ENCODE measurements at regions of chr17 and their contacts with region 1.

Region 1: GRCh38 chr17:6753006-6753445 is 2.8 kb upstream of the XAF1 start:
- DNase-seq: no peak
- H3K4me3 Mint-ChIP-seq: no peak overlapping the region
- H3K27ac Mint-ChIP-seq: peak overlapping the region; percentile 64
- H3K4me1 Mint-ChIP-seq: peaks cover 52% of the 10 kb centered on the region
- H3K27me3 Mint-ChIP-seq: peaks cover 4% of the 10 kb centered on the region

Region 2: DNA sequence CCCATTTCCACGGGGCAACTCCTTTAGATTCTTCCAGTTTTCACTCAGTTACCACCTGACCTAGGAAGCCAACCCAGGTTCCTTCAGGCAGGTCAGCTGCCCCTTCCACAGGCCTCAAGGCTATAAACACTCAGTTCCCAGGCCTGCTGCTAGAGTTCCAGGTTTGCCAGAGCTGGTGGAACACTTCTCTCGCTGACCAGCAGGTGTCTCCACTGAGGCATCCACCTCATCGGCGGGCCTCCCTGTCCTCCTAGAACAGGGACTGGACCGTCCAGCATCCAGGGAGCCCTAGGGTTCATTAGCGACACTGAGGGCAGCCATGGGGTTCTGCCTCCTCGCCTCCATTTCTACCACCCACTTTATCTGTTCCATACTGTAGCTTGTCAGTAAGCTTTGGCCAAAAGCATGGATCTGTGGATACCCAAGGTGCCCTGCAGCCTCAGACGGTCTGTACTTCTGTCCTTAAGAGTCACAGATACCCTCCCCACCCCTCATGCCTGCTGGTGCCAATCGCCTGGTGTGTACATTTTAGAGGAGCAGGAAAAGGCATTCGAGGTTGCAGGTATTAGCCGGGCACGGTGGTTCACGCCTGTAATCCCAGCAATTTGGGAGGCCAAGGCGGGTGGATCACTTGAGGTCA is 279.8 kb before region 1 on chr17:
- intact Hi-C with region 1: loop called (anchors 5 kb)
- DNase-seq: peak; percentile 57
- H3K4me3 Mint-ChIP-seq: no peak overlapping the region
- H3K27ac Mint-ChIP-seq: no peak overlapping the region
- H3K4me1 Mint-ChIP-seq: no peaks in the 10 kb centered on the region
- H3K27me3 Mint-ChIP-seq: no peaks in the 10 kb centered on the region

Region 3: GRCh38 chr17:6660805-6661463 is 92.1 kb before region 1 on chr17:
- intact Hi-C with region 1: loop called (anchors 5 kb)
- DNase-seq: no peak
- H3K4me3 Mint-ChIP-seq: peak overlapping the region; percentile 28
- H3K27ac Mint-ChIP-seq: peak overlapping the region; percentile 37
- H3K4me1 Mint-ChIP-seq: peaks cover 41% of the 10 kb centered on the region
- H3K27me3 Mint-ChIP-seq: peaks cover 13% of the 10 kb centered on the region

Region 4: GRCh38 chr17:7014261-7014994 is 261.4 kb after region 1 on chr17:
- intact Hi-C with region 1: loop called (anchors 5 kb)
- DNase-seq: peak; percentile 98
- H3K4me3 Mint-ChIP-seq: peak overlapping the region; percentile 99
- H3K27ac Mint-ChIP-seq: peak overlapping the region; percentile 99
- H3K4me1 Mint-ChIP-seq: peaks cover 68% of the 10 kb centered on the region
- H3K27me3 Mint-ChIP-seq: peaks cover 6% of the 10 kb centered on the region